Sciatic nerve (tissue), 2 donors: ENCODE measurements at regions of chr5 and their contacts with region 1.

Region 1: GRCh38 chr5:98954392-98955028 is 25.7 kb upstream of the CHD1 start:
- DNase-seq: no peak
- ATAC-seq: no peak

Region 2: GRCh38 chr5:99621772-99622681 is 667.5 kb after region 1 on chr5:
- intact Hi-C with region 1: loop called (anchors 5 kb)
- DNase-seq: no peak
- ATAC-seq: no peak